Mammary epithelial cell (primary cell): ENCODE measurements at regions of chr5 and their contacts with region 1.

Region 1: DNA sequence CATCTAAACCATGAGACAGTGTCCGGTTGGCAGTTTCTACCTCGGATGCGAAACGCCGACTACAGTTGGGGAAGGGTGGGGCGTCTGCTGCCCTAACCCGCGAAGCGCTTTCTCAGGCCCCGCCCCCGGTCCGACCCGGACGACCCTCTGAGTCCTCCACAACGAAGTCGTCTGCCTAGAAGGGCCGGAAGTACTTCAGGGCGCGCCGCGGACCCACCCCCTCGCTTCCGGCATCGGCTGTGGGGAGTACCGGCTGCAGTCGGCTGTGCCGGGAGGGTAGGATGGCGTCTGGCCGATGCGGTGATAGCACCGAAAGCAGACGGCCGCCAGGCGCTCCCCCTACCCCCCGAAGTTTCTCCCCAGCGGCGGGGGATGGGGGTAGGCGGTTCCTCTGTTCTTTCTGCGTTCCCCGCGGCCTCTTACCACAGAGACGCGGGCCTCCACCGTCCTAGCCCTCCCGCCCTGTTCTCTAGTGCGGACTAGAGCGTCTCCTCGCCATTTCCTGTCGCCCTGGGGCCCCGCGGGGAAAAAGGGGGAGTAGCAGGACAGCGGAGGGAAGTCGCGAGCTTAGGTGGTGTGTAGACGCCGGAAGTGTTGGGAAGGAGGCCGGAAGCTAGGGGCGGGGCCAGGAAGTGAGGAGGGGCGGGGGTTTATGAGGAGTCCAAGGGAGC is at the start of gene TRIM41:
- DNase-seq: peak; percentile 97
- H3K4me3 ChIP-seq: peak within 1 kb of the TSS; percentile 86 to 99 (median 98)
- H3K27ac ChIP-seq: peak within 1 kb of the TSS; percentile 70
- H3K4me1 ChIP-seq: peaks cover 10% of the 10 kb centered on the region
- H3K27me3 ChIP-seq: no peaks in the 10 kb centered on the region
- CTCF ChIP-seq: peak in 1 of 2 donors; percentile 20
- total RNA-seq, gene TRIM41: 10.3 to 30.6 TPM

Region 2: GRCh38 chr5:180860887-180861822 is 362.0 kb before region 1 on chr5 and contains the start of gene ZFP62:
- CTCF ChIA-PET with region 1: no interaction called
- dilution Hi-C with region 1: no loop called
- in situ Hi-C with region 1: no loop called
- intact Hi-C with region 1: loop called (anchors 1 kb)
- DNase-seq: peak; percentile 92
- H3K4me3 ChIP-seq: peak within 1 kb of the TSS; percentile 88 to 97 (median 96)
- H3K27ac ChIP-seq: peak within 1 kb of the TSS; percentile 60
- H3K4me1 ChIP-seq: peaks cover 7% of the 10 kb centered on the region
- H3K27me3 ChIP-seq: no peaks in the 10 kb centered on the region
- CTCF ChIP-seq: no peak
- total RNA-seq, gene ZFP62: 17.2 to 17.5 TPM

Region 3: GRCh38 chr5:180868960-180869359 is 354.2 kb before region 1 on chr5:
- CTCF ChIA-PET with region 1: no interaction called
- dilution Hi-C with region 1: no loop called
- in situ Hi-C with region 1: no loop called
- intact Hi-C with region 1: loop called (anchors 2 kb)
- DNase-seq: peak; percentile 68
- H3K4me3 ChIP-seq: no peak overlapping the region
- H3K27ac ChIP-seq: no peak overlapping the region
- H3K4me1 ChIP-seq: no peaks in the 10 kb centered on the region
- H3K27me3 ChIP-seq: no peaks in the 10 kb centered on the region
- CTCF ChIP-seq: peak; percentile 78 to 93

Region 4: GRCh38 chr5:181059297-181060230 is 163.6 kb before region 1 on chr5:
- CTCF ChIA-PET with region 1: no interaction called
- dilution Hi-C with region 1: no loop called
- in situ Hi-C with region 1: no loop called
- intact Hi-C with region 1: no loop called
- DNase-seq: no peak
- H3K4me3 ChIP-seq: no peak overlapping the region
- H3K27ac ChIP-seq: no peak overlapping the region
- H3K4me1 ChIP-seq: no peaks in the 10 kb centered on the region
- H3K27me3 ChIP-seq: peaks cover 35% of the 10 kb centered on the region
- CTCF ChIP-seq: no peak

Region 5: DNA sequence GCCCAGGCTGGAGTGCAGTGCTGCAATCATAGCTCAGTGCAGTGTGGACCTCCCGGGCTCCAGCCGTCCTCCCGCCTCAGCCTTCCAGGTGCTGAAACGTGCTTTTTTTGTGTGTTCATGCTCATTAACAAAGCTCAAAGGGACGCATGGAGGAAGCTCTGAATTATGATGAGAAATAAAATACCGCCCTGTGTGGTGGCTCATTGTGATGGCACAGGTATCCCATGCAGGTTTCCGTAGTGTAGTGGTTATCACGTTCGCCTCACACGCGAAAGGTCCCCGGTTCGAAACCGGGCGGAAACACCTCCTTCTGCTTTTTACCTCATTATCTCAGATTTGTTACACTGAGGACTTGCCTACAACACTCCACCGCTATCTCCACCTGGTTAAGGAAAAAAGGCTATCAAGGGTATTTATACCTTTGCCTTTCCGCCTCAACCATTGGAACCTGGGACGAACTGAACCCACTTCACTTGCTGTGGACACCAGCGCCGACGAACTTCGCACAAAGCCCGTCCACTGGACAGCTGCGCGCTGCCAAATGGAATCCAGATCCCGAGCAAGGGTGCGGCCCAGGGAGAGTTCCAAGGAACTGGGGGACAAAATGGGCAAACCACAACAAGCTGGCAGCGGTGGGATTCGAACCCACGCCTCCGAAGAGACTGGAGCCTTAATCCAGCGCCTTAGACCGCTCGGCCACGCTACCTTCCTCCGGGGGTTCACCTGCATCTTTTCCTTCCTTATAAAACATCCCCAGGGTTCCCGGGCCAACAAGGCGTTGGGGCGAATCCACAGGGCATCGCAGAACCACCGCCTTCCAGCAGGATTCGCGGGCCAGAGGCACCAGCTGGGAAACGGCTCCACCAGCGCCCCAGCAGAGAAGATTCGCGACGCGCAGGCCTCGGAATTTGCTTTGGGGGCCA is 49.5 kb before region 1 on chr5:
- CTCF ChIA-PET with region 1: no interaction called
- dilution Hi-C with region 1: no loop called
- in situ Hi-C with region 1: no loop called
- intact Hi-C with region 1: no loop called
- DNase-seq: peak; percentile 95
- H3K4me3 ChIP-seq: peak overlapping the region; percentile 33 to 41 (median 37)
- H3K27ac ChIP-seq: no peak overlapping the region
- H3K4me1 ChIP-seq: peaks cover 5% of the 10 kb centered on the region
- H3K27me3 ChIP-seq: no peaks in the 10 kb centered on the region
- CTCF ChIP-seq: no peak

Region 6: GRCh38 chr5:181207214-181208107 is 15.7 kb before region 1 on chr5:
- CTCF ChIA-PET with region 1: no interaction called
- dilution Hi-C with region 1: no loop called
- in situ Hi-C with region 1: no loop called
- intact Hi-C with region 1: loop called (anchors 1 kb)
- DNase-seq: peak; percentile 91
- H3K4me3 ChIP-seq: peak overlapping the region; percentile 48 to 61 (median 61)
- H3K27ac ChIP-seq: peak overlapping the region; percentile 52
- H3K4me1 ChIP-seq: peaks cover 22% of the 10 kb centered on the region
- H3K27me3 ChIP-seq: no peaks in the 10 kb centered on the region
- CTCF ChIP-seq: no peak

Region 7: DNA sequence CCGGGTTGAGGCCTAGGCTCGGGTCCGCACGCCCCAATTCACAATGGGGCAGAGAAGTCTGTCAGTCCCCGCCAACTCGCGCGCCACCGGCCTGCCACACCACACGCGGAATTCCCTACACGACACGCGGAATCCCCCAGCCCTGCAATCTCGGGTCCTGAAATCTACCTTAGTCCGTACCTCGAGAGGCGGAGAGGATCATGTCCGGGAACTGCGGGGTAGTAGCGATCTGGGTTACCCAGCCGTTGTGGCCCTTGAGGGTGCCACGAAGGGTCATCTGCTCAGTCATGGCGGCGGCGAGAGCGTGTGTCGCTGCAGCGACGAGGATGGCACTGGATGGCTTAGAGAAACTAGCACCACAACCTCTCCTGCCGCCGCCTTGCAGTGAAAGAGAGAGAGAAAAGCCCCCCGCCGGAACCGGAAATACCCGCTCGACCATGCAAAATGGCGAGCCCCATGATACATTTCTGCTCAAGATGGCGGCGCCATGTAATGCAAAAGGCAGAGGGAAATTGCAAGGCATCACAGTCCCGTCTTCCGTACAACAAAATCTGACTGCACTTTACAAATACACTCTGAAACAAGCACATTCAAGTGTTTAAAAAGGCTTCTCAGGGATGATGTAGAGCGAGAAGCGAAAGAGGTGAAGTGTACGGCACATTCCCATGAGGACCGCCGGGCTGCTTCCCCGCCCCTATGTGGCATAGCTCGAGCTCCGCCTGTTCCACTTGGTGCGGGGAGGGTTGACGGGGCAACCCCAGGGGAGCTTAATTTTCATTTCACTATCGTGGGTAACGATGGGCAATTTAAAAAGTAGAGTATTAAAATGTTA is 20.5 kb after region 1 on chr5 and contains the start of gene RACK1:
- CTCF ChIA-PET with region 1: no interaction called
- dilution Hi-C with region 1: no loop called
- in situ Hi-C with region 1: no loop called
- intact Hi-C with region 1: loop called (anchors 1 kb)
- DNase-seq: peak; percentile 86
- H3K4me3 ChIP-seq: peak within 1 kb of the TSS; percentile 96 to 100 (median 98)
- H3K27ac ChIP-seq: peak within 1 kb of the TSS; percentile 84
- H3K4me1 ChIP-seq: peaks cover 35% of the 10 kb centered on the region
- H3K27me3 ChIP-seq: no peaks in the 10 kb centered on the region
- CTCF ChIP-seq: no peak
- total RNA-seq, gene RACK1: 2,031 to 4,986 TPM